ENCODE measurements at regions of chr5 and their contacts with region 1.

Region 1: DNA sequence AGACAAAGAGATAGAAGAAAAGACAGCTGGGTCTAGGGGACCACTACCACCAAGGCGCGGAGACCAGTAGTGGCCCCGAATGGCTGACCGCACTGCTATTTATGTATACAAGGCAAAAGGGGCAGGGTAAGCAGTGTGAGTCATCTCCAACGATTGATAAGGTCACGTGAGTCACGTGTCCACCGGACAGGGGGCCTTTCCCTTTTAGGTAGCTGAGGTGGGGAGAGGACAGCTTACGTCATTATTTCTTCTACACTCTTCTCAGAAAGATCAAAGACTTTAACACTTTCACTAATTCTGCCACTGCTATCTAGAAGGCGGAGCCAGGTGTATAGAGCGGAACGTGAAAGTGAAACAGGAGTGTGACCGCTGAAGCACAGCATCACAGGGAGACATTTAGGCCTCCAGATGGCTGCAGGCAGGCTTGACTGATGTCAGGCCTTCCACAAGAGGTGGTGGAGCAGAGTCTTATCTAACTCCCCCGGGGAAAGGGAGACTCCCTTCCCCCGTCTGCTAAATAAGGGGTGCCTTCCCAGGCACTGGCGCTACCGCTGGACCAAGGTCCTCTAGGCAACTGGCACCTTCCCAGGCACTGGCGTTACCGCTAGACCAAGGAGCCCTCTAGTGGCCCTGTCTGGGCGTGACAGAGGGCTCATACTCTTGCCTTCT is 6.1 kb upstream of the PRR16 start:
- DNase-seq: peak; percentile 79 to 88 (median 84)
- ATAC-seq: peak in 3 of 4 donors; percentile 77 to 80 (median 79)
- H3K4me3 ChIP-seq: peak overlapping the region in 10 of 12 donors; percentile 17 to 59 (median 46)
- H3K27ac ChIP-seq: peak overlapping the region in 7 of 12 donors; percentile 18 to 53 (median 39)
- H3K4me1 ChIP-seq: peaks cover 0 to 17% (median 5%) of the 10 kb centered on the region in 12 donors
- H3K27me3 ChIP-seq: no peaks in the 10 kb centered on the region
- CTCF ChIP-seq: peak; percentile 63 to 89 (median 83)
- POLR2A ChIP-seq: no peak

Region 2: DNA sequence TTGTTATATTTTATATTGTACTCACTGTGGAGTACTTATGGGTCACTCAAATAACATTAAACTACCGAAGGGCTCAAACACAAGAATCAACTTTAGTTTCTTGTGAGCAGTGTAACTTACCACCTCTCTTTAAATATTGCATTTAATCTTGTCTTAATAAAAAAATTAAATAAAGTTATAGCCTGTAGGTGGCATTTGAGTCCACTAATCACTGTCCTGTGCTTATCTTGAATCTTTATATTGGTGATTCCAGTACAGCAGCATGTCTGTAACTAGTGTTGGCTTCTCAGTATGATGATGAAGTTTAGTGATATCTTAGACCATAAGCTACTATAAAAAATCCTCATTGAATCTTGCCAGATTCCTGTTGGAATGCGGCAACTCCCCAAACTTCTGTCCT is 514.8 kb before region 1 on chr5:
- intact Hi-C with region 1: loop called in 8 of 10 experiments (anchors 2 to 10 kb)
- DNase-seq: no peak
- ATAC-seq: peak in 2 of 4 donors; percentile 34 to 68
- H3K4me3 ChIP-seq: no peak overlapping the region
- H3K27ac ChIP-seq: no peak overlapping the region
- H3K4me1 ChIP-seq: no peaks in the 10 kb centered on the region
- H3K27me3 ChIP-seq: no peaks in the 10 kb centered on the region
- CTCF ChIP-seq: peak in 10 of 12 donors; percentile 20 to 55 (median 36)
- POLR2A ChIP-seq: no peak

Region 3: GRCh38 chr5:119966028-119966427 is 491.9 kb before region 1 on chr5:
- intact Hi-C with region 1: loop called in 1 of 10 experiments (anchors 5 kb)
- DNase-seq: no peak
- ATAC-seq: peak in 3 of 4 donors; percentile 58 to 74 (median 67)
- H3K4me3 ChIP-seq: no peak overlapping the region
- H3K27ac ChIP-seq: peak overlapping the region in 3 of 12 donors; percentile 1 to 38 (median 37)
- H3K4me1 ChIP-seq: no peaks in the 10 kb centered on the region
- H3K27me3 ChIP-seq: no peaks in the 10 kb centered on the region
- CTCF ChIP-seq: peak in 7 of 12 donors; percentile 11 to 47 (median 39)
- POLR2A ChIP-seq: no peak

Region 4: DNA sequence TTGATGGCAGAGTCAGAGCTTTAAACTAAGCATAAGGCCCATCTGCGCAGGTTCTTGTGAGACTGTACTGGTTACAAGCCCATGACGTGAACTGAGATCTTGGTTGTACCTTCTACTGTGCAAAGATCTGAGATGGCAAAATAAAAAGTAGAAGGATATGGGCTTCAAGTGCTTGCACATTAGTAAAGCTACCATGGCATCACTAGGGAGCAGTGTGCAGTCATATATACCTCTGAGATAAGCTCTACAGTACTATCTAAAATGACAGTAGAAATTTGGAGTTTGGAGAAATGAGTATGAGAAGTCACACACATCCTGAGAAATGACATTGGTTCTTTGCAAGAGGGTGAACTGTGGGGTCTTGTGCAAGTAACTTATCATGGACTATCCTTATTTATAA is 402.1 kb before region 1 on chr5:
- intact Hi-C with region 1: loop called (anchors 5 to 10 kb)
- DNase-seq: no peak
- ATAC-seq: peak; percentile 37 to 82 (median 67)
- H3K4me3 ChIP-seq: no peak overlapping the region
- H3K27ac ChIP-seq: peak overlapping the region in 7 of 12 donors; percentile 1 to 75 (median 40)
- H3K4me1 ChIP-seq: peaks cover 0 to 36% (median 9%) of the 10 kb centered on the region in 12 donors
- H3K27me3 ChIP-seq: no peaks in the 10 kb centered on the region
- CTCF ChIP-seq: peak in 8 of 12 donors; percentile 7 to 51 (median 38)
- POLR2A ChIP-seq: no peak

Region 5: GRCh38 chr5:120062515-120063048 is 395.4 kb before region 1 on chr5:
- intact Hi-C with region 1: loop called in 9 of 10 experiments (anchors 5 to 10 kb)
- DNase-seq: no peak
- ATAC-seq: no peak
- H3K4me3 ChIP-seq: no peak overlapping the region
- H3K27ac ChIP-seq: no peak overlapping the region
- H3K4me1 ChIP-seq: peaks cover 0 to 10% (median 0%) of the 10 kb centered on the region in 12 donors
- H3K27me3 ChIP-seq: no peaks in the 10 kb centered on the region
- CTCF ChIP-seq: no peak
- POLR2A ChIP-seq: no peak

Region 6: DNA sequence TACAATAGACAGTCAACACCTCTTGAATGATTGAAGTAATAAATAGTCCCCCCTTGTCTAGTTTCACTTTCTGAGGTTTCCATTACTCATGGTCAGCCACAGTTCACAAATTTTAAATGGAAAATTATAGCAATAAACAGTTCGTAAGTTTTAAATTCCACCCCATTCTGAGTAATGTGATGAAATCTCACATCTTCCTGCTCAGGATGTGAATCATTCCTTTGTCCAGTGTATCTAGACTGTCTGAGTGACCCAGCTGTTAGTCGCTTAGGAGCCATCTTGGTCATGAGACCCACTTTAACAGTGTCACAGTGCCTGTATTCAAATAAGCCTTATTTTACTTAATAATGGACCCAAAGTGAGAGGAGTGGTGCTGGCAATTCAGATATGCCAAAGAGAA is 305.5 kb before region 1 on chr5:
- intact Hi-C with region 1: loop called in 1 of 10 experiments (anchors 10 kb)
- DNase-seq: no peak
- ATAC-seq: peak in 3 of 4 donors; percentile 66 to 93 (median 70)
- H3K4me3 ChIP-seq: no peak overlapping the region
- H3K27ac ChIP-seq: peak overlapping the region in 4 of 12 donors; percentile 12 to 37 (median 18)
- H3K4me1 ChIP-seq: no peaks in the 10 kb centered on the region
- H3K27me3 ChIP-seq: no peaks in the 10 kb centered on the region
- CTCF ChIP-seq: no peak
- POLR2A ChIP-seq: no peak

Measured in heart left ventricle (tissue), 16 donors.